ENCODE measurements at regions of chr11 and their contacts with region 1.

Region 1: DNA sequence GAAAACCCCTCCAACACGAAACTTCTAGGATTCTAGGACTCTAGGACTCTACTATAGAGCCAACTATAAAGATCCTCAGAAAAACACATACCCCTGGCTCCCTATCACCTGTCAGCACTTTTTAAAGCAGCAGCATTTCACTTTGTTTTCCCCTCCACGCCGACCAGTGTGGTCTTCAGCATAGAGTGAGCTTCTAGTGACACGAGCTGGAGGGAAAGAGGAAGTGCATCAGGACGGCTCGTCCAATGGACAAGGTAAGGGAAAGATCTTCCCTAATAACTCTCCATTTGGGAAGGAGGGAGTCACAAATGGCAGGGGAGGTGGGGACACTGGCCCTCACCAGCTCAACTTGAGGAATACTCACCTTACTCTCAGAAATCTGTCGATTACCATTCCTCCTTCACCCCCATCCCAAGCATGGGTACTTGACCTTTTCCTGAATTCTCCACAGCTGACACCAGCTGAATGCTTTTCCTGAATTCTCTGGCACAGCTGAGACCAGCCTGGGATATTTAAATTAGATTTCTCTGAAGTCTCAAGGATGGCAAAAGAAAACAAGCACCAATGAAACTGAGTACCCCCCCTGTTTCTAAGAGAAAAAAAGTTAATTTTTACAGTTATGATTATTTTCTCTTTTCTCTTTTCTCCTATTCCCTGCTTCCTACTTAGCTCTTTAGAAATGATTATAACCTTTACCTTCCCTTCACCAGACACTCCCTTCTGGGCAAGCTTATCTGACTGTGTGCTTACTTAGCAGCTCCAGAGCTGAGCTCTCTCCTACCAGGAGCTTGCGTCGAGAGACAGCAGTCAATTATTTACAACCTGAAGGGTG is 33.3 kb upstream of the NNMT start:
- DNase-seq: peak in 6 of 7 donors; percentile 57 to 82 (median 64)
- H3K4me3 ChIP-seq: no peak overlapping the region
- H3K27ac ChIP-seq: peak overlapping the region in 1 of 5 donors; percentile 38
- H3K4me1 ChIP-seq: peaks cover 13 to 28% of the 10 kb centered on the region in 2 donors
- H3K27me3 ChIP-seq: no peaks in the 10 kb centered on the region
- CTCF ChIP-seq: peak; percentile 28 to 76 (median 68)
- POLR2A ChIP-seq: no peak

Region 2: GRCh38 chr11:113896156-113896879 is 366.6 kb before region 1 on chr11:
- intact Hi-C with region 1: loop called (anchors 5 kb)
- DNase-seq: peak in 6 of 7 donors; percentile 16 to 69 (median 40)
- H3K4me3 ChIP-seq: no peak overlapping the region
- H3K27ac ChIP-seq: no peak overlapping the region
- H3K4me1 ChIP-seq: peaks cover 3 to 10% of the 10 kb centered on the region in 2 donors
- H3K27me3 ChIP-seq: no peaks in the 10 kb centered on the region
- CTCF ChIP-seq: peak; percentile 58 to 81 (median 70)
- POLR2A ChIP-seq: no peak

Region 3: DNA sequence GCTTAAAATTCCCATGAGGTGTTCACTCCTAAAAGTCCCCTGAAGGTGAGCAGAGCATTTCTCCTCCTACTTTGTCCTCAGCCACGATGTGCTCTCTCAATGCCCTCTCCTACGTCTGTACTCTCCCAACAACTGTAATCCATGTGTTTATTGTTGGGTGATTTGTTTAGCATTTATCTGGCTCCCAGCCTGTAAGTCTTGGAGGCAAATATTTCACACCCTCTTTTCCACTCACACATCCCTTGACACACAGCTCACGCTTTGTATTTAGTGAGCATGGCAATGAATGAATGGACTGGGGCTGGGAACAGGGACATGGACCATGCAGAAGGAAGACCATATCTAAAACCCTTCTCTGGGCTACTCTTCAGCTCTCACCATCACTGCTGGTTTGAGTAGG is 265.4 kb before region 1 on chr11:
- intact Hi-C with region 1: loop called (anchors 2 to 5 kb)
- DNase-seq: no peak
- H3K4me3 ChIP-seq: no peak overlapping the region
- H3K27ac ChIP-seq: no peak overlapping the region
- H3K4me1 ChIP-seq: no peaks in the 10 kb centered on the region
- H3K27me3 ChIP-seq: no peaks in the 10 kb centered on the region
- CTCF ChIP-seq: no peak
- POLR2A ChIP-seq: no peak

Region 4: DNA sequence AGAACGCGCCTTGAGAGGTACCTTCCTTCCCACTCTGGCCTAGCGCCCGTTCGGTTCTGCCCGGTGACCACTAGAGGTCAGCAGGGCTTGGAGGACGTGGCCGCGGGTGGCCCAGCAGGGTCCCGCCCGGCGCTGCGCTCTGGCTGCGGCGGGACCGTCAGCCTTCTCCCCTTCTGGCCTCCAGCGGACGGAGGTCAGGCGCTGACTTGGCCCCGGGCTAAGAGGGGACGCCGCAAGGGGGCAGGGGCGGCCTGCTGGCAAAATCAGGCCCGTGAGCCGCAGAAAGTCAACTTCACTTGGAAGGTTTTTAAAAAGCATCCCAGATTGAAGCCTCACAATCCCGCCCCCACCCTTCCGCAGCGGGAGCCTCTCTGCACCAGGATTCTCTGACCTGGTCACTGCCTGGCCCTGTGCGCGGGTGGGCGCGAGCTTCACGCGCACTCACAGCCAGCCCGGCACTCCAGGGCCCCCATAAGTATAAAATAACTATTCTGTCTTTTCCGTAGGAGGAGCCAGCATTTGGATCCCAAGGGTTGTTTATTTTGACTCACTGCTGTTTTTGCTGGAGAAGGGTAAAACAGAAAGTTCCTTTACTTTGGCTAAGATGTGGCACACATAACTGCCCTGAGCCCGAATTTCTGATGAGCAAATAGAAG is 226.6 kb before region 1 on chr11:
- intact Hi-C with region 1: loop called (anchors 5 kb)
- DNase-seq: peak; percentile 85 to 93 (median 89)
- H3K4me3 ChIP-seq: peak overlapping the region in 2 of 4 donors; percentile 18 to 43
- H3K27ac ChIP-seq: peak overlapping the region in 4 of 5 donors; percentile 30 to 83 (median 71)
- H3K4me1 ChIP-seq: peaks cover 0 to 14% of the 10 kb centered on the region in 2 donors
- H3K27me3 ChIP-seq: no peaks in the 10 kb centered on the region
- CTCF ChIP-seq: peak; percentile 69 to 95 (median 86)
- POLR2A ChIP-seq: peak in 1 of 2 donors; percentile 27

Region 5: GRCh38 chr11:114180301-114181055 is 82.4 kb before region 1 on chr11:
- intact Hi-C with region 1: loop called in 1 of 2 experiments (anchors 5 kb)
- DNase-seq: peak in 3 of 7 donors; percentile 61 to 85 (median 65)
- H3K4me3 ChIP-seq: peak overlapping the region in 1 of 4 donors; percentile 46
- H3K27ac ChIP-seq: peak overlapping the region; percentile 87 to 98 (median 96)
- H3K4me1 ChIP-seq: peaks cover 60 to 81% of the 10 kb centered on the region in 2 donors
- H3K27me3 ChIP-seq: no peaks in the 10 kb centered on the region
- CTCF ChIP-seq: peak in 5 of 6 experiments; percentile 46 to 60 (median 56)
- POLR2A ChIP-seq: no peak

Region 6: DNA sequence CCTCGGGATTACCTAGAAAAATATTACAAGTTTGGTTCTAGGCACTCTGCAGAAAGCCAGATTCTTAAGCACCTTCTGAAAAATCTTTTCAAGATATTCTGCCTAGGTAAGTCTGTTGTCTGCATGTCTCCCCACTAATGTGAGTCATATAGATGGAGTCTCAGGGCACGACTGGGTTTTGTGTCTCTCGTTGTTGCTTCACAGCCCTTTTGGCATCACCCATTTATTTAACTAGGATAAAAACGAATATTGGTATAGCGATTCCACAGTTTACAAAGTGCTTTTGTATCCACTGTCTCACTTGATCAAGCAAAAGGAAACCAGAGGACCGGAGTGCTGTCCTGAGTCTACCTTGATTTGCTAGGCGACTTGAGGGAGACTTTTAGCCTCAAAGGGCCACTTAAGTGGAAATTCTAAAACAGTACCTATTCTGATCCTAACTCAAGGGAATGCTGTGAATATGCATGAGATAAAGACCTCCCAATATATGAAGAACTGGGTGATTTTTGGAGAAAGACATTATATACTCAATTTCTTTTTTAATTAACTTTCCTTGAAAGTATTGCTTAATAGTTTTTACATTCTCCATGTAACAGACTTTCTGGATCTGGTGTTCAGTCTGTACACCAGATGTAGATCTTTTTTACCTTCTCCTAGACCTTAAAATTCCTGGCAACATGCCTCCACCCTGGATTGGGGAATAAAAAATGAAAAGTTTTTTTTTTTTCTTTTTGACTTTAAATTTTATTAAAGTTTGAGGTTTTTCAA is 33.9 kb after region 1 on chr11:
- intact Hi-C with region 1: no loop called
- DNase-seq: no peak
- H3K4me3 ChIP-seq: peak overlapping the region in 1 of 4 donors; percentile 35
- H3K27ac ChIP-seq: peak overlapping the region; percentile 39 to 86 (median 50)
- H3K4me1 ChIP-seq: peaks cover 0 to 12% of the 10 kb centered on the region in 2 donors
- H3K27me3 ChIP-seq: no peaks in the 10 kb centered on the region
- CTCF ChIP-seq: no peak
- POLR2A ChIP-seq: no peak

Measured in adrenal gland (tissue), 19 donors.